ENCODE measurements at regions of chr2 and their contacts with region 1.

Region 1: DNA sequence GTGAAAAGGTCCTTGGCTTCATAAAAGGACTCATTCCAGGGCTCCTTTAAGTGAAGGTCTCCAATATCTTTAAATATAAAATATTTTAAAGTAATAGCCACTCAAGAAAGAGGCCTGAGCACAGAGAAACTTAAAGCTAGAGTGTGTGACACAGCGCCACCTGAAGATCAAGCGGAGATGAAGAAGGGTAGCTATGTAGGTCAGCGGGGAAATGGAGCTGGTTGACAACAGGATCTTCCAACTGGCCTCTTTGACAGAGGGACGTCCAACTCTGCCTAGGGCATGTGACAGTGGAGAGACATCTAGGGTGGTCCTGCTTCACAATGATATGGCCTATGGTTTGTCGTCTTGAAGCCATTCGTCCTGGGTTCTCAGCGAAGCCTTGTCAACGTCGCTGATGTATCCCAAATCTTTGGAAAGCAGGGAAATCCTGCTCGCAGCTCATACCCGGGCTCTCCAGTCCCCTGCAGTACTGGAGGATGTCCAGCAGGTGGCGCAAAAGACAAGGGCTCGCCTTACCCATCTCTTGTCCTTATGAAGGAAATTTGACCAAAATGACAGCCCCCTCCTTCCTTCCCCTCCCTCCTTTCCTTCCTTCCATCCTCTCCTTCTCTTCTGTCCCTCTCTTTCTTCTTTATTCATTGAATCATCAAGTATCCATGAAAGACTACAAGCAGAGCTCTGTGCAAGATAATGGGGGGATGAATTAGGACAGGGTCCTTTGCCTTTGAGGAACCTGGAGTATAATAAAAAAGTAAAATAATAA is 59.6 kb downstream of the LONRF2 start:
- DNase-seq: peak; percentile 84
- ATAC-seq: peak; percentile 74
- H3K4me3 Mint-ChIP-seq: peak overlapping the region; percentile 51
- H3K27ac Mint-ChIP-seq: no peak overlapping the region
- H3K4me1 Mint-ChIP-seq: peaks cover 12% of the 10 kb centered on the region
- H3K27me3 Mint-ChIP-seq: no peaks in the 10 kb centered on the region
- CTCF ChIP-seq: peak; percentile 99

Region 2: GRCh38 chr2:99725820-99726219 is 536.9 kb before region 1 on chr2:
- CTCF ChIA-PET with region 1: interaction called, 10 read pairs
- POLR2A ChIA-PET with region 1: no interaction called
- DNase-seq: no peak
- ATAC-seq: no peak
- H3K4me3 Mint-ChIP-seq: no peak overlapping the region
- H3K27ac Mint-ChIP-seq: no peak overlapping the region
- H3K4me1 Mint-ChIP-seq: peaks cover 14% of the 10 kb centered on the region
- H3K27me3 Mint-ChIP-seq: no peaks in the 10 kb centered on the region
- CTCF ChIP-seq: no peak

Region 3: GRCh38 chr2:100197631-100198153 is 65.0 kb before region 1 on chr2:
- CTCF ChIA-PET with region 1: interaction called, 15 read pairs
- POLR2A ChIA-PET with region 1: no interaction called
- DNase-seq: peak; percentile 58
- ATAC-seq: peak; percentile 85
- H3K4me3 Mint-ChIP-seq: no peak overlapping the region
- H3K27ac Mint-ChIP-seq: no peak overlapping the region
- H3K4me1 Mint-ChIP-seq: peaks cover 26% of the 10 kb centered on the region
- H3K27me3 Mint-ChIP-seq: no peaks in the 10 kb centered on the region; the same call in 1 of the 2 replicates
- CTCF ChIP-seq: no peak

Region 4: GRCh38 chr2:100272841-100273329 is 10.1 kb after region 1 on chr2:
- CTCF ChIA-PET with region 1: interaction called, 67 read pairs
- POLR2A ChIA-PET with region 1: no interaction called
- DNase-seq: no peak
- ATAC-seq: no peak
- H3K4me3 Mint-ChIP-seq: no peak overlapping the region
- H3K27ac Mint-ChIP-seq: no peak overlapping the region
- H3K4me1 Mint-ChIP-seq: peaks cover 5% of the 10 kb centered on the region; the same call in 1 of the 2 replicates
- H3K27me3 Mint-ChIP-seq: no peaks in the 10 kb centered on the region
- CTCF ChIP-seq: no peak

Region 5: GRCh38 chr2:100321181-100321865 is 58.6 kb after region 1 on chr2:
- CTCF ChIA-PET with region 1: interaction called, 58 read pairs
- POLR2A ChIA-PET with region 1: no interaction called
- DNase-seq: peak; percentile 75
- ATAC-seq: peak; percentile 89
- H3K4me3 Mint-ChIP-seq: peak overlapping the region; percentile 55
- H3K27ac Mint-ChIP-seq: no peak overlapping the region
- H3K4me1 Mint-ChIP-seq: peaks cover 5% of the 10 kb centered on the region
- H3K27me3 Mint-ChIP-seq: peaks cover 61% of the 10 kb centered on the region
- CTCF ChIP-seq: no peak

Region 6: GRCh38 chr2:100394111-100394641 is 131.4 kb after region 1 on chr2:
- CTCF ChIA-PET with region 1: interaction called, 433 read pairs
- POLR2A ChIA-PET with region 1: no interaction called
- DNase-seq: no peak
- ATAC-seq: no peak
- H3K4me3 Mint-ChIP-seq: no peak overlapping the region
- H3K27ac Mint-ChIP-seq: no peak overlapping the region
- H3K4me1 Mint-ChIP-seq: no peaks in the 10 kb centered on the region
- H3K27me3 Mint-ChIP-seq: no peaks in the 10 kb centered on the region
- CTCF ChIP-seq: no peak

Region 7: DNA sequence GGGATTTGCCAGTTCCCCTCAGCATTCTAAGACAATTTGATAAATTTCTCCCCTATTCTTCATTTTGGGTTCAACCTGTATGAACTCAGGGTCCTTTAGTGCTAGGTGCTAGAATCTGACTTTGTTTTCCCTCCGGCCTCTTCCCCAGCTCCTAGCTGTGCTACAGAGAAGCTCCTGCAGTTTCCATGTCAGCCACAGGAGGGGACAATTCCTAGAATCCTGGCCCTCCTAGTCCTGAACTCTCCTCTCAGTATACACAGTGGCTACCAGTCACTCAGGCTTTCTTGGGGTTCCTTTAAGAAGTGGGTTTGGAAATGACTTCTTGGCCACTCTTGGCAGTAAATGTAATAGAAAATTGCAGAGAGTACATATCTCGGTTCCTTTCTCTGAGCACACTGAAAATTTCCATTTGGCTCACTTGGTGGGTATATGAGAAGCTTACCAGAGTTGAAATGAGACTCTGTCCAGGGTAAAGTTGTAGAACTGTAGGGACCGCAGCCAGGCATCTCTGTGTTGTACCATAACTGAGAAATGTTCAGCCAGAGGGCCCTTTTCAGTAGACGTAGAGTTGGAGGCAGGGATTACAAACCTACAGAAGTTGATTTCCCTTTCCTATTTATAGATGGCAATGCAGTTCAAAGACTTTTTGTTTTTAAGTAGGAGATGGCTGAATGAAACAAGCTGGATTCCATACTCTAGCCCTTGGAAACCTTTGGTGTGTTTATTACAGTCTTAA is 159.8 kb after region 1 on chr2:
- CTCF ChIA-PET with region 1: interaction called, 33 read pairs
- POLR2A ChIA-PET with region 1: no interaction called
- DNase-seq: peak; percentile 60
- ATAC-seq: peak; percentile 91
- H3K4me3 Mint-ChIP-seq: no peak overlapping the region
- H3K27ac Mint-ChIP-seq: no peak overlapping the region
- H3K4me1 Mint-ChIP-seq: peaks cover 14% of the 10 kb centered on the region
- H3K27me3 Mint-ChIP-seq: no peaks in the 10 kb centered on the region
- CTCF ChIP-seq: 0 out of 2 replicates have a peak, but pooled peaks have one; percentile 25